Common myeloid progenitor, CD34-positive (primary cell): ENCODE measurements at regions of chr1 and their contacts with region 1.

Region 1: DNA sequence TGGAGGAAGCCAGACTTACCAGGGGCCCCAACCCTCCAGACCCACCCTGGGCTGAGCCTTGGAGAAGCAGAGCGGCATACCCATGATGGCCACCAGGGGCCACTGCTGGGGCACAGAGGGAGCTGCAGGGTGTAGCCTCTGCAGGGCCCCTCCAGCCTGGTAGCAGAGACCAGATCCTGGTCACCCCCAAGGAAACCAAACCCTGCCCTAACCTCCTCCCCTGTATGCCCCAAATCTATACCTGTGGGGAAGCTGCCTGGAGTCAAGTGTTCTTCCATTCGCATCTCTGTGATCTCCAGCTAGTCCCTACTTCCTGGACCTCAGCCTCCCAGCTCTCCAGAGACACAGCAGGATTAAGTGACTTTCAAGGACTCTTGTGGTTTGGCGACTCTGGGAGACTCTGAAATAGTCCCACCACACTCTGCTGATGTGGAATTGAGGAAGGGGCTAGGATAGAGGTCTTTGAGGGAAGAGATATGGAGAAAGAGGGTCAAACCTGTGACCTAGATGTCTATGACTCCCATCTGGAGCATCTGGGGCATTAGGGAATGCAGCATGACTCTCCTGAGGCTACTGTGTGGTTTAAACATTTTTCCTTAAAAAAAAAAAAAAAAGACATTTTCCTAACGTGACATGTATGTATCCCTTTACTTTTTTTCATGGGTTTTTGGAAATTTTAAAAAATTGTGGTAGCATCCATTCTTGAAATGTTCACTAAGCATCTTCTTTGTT is 119.2 kb upstream of the IPO9 start:
- DNase-seq: peak; percentile 39 to 66 (median 57)
- H3K4me3 ChIP-seq: no peak overlapping the region
- H3K27ac ChIP-seq: no peak overlapping the region
- H3K4me1 ChIP-seq: peaks cover 0 to 29% (median 8%) of the 10 kb centered on the region in 4 experiments
- H3K27me3 ChIP-seq: no peaks in the 10 kb centered on the region

Region 2: GRCh38 chr1:201559679-201560162 is 150.0 kb before region 1 on chr1:
- CTCF ChIA-PET with region 1: interaction called, 197 read pairs
- POLR2A ChIA-PET with region 1: no interaction called
- DNase-seq: peak; percentile 84 to 91 (median 89)
- H3K4me3 ChIP-seq: no peak overlapping the region
- H3K27ac ChIP-seq: no peak overlapping the region
- H3K4me1 ChIP-seq: peaks cover 3 to 45% (median 34%) of the 10 kb centered on the region in 4 experiments
- H3K27me3 ChIP-seq: no peaks in the 10 kb centered on the region

Region 3: DNA sequence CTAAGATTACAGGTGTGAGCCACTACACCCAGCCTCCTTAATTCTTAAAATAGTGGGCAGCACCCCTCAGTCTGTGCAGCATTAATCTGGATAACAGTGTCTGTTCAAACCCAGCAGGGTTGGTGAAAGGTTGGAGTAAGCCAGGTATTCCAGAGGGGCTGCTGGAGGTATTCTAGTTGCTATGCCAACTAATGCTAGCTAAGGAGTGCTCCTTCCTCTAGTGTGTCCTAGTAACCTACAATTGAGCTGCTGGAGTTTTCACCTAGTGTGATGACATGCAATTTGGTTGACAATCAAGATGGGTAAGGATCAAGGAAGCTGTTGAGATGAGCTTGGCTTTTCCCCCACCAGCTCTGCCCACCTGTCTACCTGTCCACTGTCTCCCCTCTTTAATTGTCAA is 19.0 kb after region 1 on chr1:
- CTCF ChIA-PET with region 1: interaction called, 12 read pairs
- POLR2A ChIA-PET with region 1: no interaction called
- DNase-seq: no peak
- H3K4me3 ChIP-seq: no peak overlapping the region
- H3K27ac ChIP-seq: no peak overlapping the region
- H3K4me1 ChIP-seq: no peaks in the 10 kb centered on the region
- H3K27me3 ChIP-seq: no peaks in the 10 kb centered on the region

Region 4: GRCh38 chr1:201778279-201779065 is 68.7 kb after region 1 on chr1:
- CTCF ChIA-PET with region 1: interaction called, 350 read pairs
- POLR2A ChIA-PET with region 1: no interaction called
- DNase-seq: no peak
- H3K4me3 ChIP-seq: no peak overlapping the region
- H3K27ac ChIP-seq: no peak overlapping the region
- H3K4me1 ChIP-seq: no peaks in the 10 kb centered on the region
- H3K27me3 ChIP-seq: no peaks in the 10 kb centered on the region